SK-N-SH (cell line): ENCODE measurements at regions of chr12 and their contacts with region 1.

Region 1: DNA sequence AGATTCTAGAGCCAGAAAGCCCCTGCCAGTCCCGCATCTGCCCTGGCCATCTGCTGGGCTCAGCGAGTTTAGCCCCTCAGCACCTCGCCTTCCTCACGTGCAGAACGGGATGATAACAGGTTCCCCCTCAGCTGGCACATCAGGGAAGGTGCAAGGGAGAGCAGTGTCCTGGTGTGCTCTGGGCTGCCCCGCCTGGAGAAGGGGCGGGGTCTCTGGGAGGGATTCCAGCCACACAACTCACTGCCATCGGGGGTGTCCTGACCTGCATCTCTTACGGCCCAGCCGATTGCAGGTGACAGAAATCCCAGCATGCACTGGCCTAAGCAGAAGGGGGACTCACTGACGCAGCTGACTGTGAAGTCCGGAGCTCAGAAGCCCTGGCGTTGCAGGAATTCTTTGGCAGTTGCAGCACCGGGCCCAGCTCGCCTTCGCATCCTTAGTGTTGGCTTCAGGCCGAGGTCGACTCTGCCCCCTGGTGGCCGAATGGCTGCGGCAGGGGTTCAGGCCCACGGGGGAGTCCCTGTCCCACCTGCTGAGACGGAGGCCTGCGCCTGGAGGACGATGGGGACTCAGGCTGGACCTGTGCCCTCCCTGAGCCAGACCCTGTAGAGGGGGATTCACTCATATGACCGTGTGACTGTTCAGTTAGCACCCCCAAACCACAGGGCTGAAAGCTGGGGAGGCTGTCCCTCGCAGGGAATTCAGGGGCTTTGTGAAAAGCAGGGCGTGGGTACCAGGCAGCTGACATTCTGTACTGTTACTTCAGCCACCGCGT is 178.6 kb downstream of the ADGRD1 start:
- DNase-seq: peak; percentile 89
- H3K4me3 ChIP-seq: peak overlapping the region in 1 of 2 experiments; percentile 50; a peak in 1 of 4 replicates
- H3K27ac ChIP-seq: no peak overlapping the region
- H3K4me1 ChIP-seq: peaks cover 0 to 46% of the 10 kb centered on the region in 2 experiments; a peak in 1 of 4 replicates
- H3K27me3 ChIP-seq: no peaks in the 10 kb centered on the region
- CTCF ChIP-seq: no peak
- EP300 ChIP-seq: no peak
- RAD21 ChIP-seq: peak; percentile 65

Region 2: DNA sequence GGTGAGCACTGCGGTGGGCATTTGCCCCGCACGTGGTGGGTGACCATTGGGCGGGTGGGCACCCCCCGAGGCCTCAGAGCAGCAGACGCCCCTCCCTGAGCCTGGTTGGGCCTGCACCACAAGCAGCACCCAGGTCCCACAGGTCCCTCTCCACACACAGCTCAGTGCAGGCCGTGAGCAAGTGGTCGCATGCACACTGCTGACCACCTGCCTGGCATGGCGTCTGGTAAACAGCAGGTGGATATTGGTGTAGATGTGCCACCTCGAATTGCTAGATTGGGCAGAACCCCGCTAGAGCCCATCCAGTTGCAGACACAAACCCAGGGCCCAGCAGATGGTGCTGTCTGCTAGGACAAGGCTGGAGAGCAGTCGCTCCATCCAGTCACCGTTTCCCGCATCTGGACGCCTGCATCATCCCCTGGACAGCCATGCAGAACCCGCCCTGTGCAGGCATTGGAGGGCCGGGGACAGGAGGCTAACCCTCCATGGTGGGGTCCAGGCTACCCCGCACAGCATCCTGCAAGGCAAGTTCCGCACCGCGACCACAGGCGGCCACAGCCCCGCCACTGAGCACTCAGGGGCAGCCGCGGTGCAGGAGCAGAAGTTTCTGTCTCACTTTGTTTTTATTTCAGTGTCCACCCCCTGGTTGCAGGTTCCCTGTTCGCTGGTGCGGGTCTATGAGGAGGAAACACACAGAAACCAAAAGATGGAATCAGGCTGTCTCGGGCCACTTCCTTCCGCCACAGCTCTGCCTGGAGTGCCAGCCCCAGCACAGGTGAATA is 370.6 kb before region 1 on chr12:
- CTCF ChIA-PET with region 1: interaction called, 15 read pairs
- POLR2A ChIA-PET with region 1: no interaction called
- DNase-seq: peak; percentile 90
- H3K4me3 ChIP-seq: no peak overlapping the region; a peak in 1 of 4 replicates
- H3K27ac ChIP-seq: no peak overlapping the region
- H3K4me1 ChIP-seq: no peaks in the 10 kb centered on the region
- H3K27me3 ChIP-seq: no peaks in the 10 kb centered on the region
- CTCF ChIP-seq: peak; percentile 24; the same call in 1 of the 2 replicates
- EP300 ChIP-seq: no peak
- RAD21 ChIP-seq: peak; percentile 92

Region 3: DNA sequence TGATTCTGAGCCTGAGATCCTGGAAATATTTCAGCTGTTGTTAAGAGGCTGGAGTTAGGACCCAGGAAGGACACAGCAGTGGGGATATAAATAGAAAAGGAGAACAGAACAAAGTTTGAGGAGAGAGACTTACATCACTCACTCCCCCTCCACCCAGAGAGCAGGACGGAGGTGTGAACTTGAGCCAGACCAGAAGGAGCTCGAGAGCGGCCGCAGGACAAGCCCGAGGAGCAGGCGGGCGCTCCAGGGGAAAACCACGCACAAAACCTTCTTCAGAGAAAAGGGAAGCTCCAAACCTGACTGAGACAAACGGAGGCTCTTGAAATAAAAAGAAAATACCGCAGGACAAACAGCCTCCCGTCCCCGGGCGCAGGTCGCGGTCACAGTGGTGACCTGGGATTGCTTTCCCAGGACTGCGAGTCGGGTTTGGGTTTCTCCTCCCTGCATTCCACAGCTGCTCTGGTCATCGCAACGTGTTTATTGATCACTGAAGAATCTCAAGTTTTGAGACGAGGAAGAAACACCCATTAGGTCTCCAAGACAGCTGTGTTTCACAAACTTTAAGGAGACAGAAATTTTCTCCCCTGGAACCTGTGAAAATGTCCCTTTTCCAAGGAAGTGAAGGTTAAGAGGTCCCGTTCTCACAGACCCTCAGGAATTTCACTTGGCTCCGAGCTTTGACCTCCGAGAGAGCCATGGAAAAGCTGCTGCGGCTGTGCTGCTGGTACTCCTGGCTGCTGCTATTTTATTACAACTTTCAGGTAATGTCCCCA is 178.3 kb before region 1 on chr12 and contains the start of gene ADGRD1:
- CTCF ChIA-PET with region 1: interaction called, 12 read pairs
- POLR2A ChIA-PET with region 1: no interaction called
- DNase-seq: no peak
- H3K4me3 ChIP-seq: no peak within 1 kb of the TSS
- H3K27ac ChIP-seq: peak within 1 kb of the TSS in 1 of 2 experiments; percentile 93; a peak in 2 of 4 replicates
- H3K4me1 ChIP-seq: peaks cover 0 to 33% of the 10 kb centered on the region in 2 experiments; a peak in 2 of 4 replicates
- H3K27me3 ChIP-seq: no peaks in the 10 kb centered on the region
- CTCF ChIP-seq: no peak
- EP300 ChIP-seq: no peak
- RAD21 ChIP-seq: no peak
- polyA plus RNA-seq, gene ADGRD1: not detected in 2 replicates

Region 4: GRCh38 chr12:131116391-131117117 is 15.8 kb before region 1 on chr12:
- CTCF ChIA-PET with region 1: interaction called, 135 read pairs
- POLR2A ChIA-PET with region 1: no interaction called
- DNase-seq: peak; percentile 66
- H3K4me3 ChIP-seq: no peak overlapping the region
- H3K27ac ChIP-seq: no peak overlapping the region
- H3K4me1 ChIP-seq: peaks cover 0 to 29% of the 10 kb centered on the region in 2 experiments; a peak in 2 of 4 replicates
- H3K27me3 ChIP-seq: no peaks in the 10 kb centered on the region
- CTCF ChIP-seq: no peak
- EP300 ChIP-seq: no peak
- RAD21 ChIP-seq: peak; percentile 53

Region 5: GRCh38 chr12:131152587-131152986 is 20.3 kb after region 1 on chr12:
- CTCF ChIA-PET with region 1: interaction called, 11 read pairs
- POLR2A ChIA-PET with region 1: interaction called, 4 read pairs
- DNase-seq: no peak
- H3K4me3 ChIP-seq: no peak overlapping the region
- H3K27ac ChIP-seq: no peak overlapping the region
- H3K4me1 ChIP-seq: peaks cover 0 to 3% of the 10 kb centered on the region in 2 experiments; a peak in 1 of 4 replicates
- H3K27me3 ChIP-seq: no peaks in the 10 kb centered on the region
- CTCF ChIP-seq: no peak
- EP300 ChIP-seq: no peak
- RAD21 ChIP-seq: no peak